Posterior vena cava (tissue), 2 donors: ENCODE measurements at regions of chr6 and their contacts with region 1.

Region 1: DNA sequence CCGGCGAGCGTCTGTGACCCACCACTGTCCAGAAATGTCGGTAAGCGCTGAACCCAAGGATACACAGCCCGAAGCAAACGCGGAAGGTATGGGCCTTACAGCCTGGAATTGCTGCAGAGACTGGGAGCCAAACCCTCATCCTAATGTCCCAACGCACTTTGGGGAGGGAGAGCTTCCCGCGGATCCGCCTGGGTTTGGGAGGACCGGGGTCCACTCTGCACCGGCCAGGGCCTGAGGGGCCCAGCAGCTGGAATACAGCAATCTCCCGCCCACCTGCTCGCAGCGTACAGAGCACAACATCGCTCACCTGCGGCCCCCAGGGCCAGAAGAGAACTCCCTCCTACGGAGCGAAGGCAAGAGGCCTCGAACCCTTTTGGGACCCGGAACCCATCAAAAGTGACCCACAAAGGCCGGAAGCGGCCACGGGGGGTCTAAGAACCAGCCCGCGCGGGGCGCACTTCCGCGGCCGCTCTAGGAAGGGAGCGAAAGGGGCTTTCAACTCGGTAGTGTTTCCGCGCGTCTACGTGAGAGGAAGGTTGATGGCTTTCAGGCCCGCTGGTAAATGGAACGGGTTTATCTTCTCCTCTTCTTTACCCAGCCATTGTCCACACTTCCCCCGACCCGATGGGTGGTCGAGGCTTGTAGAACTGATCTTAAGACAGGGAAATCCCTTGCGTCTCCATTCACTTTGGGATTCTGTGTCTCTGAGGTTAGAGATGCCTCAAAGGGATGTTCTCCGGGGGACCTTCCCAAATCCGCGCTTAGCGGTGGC is at the start of gene ZSCAN12:
- DNase-seq: peak; percentile 96
- total RNA-seq, gene ZSCAN12: 4.2 to 5.0 TPM

Region 2: GRCh38 chr6:28368522-28368921 is 31.0 kb before region 1 on chr6:
- intact Hi-C with region 1: loop called in 1 of 2 experiments (anchors 2 kb)
- DNase-seq: no peak